Mammary epithelial cell (primary cell): ENCODE measurements at regions of chr21 and their contacts with region 1.

Region 1: GRCh38 chr21:34054259-34054658 is 19.1 kb upstream of the MRPS6 start:
- DNase-seq: no peak
- H3K4me3 ChIP-seq: no peak overlapping the region
- H3K27ac ChIP-seq: no peak overlapping the region
- H3K4me1 ChIP-seq: no peaks in the 10 kb centered on the region
- H3K27me3 ChIP-seq: no peaks in the 10 kb centered on the region
- CTCF ChIP-seq: no peak

Region 2: GRCh38 chr21:34100790-34101189 is 46.5 kb after region 1 on chr21:
- CTCF ChIA-PET with region 1: no interaction called
- dilution Hi-C with region 1: loop called (anchors 5 kb)
- in situ Hi-C with region 1: no loop called
- intact Hi-C with region 1: no loop called
- DNase-seq: no peak
- H3K4me3 ChIP-seq: no peak overlapping the region
- H3K27ac ChIP-seq: no peak overlapping the region
- H3K4me1 ChIP-seq: no peaks in the 10 kb centered on the region
- H3K27me3 ChIP-seq: no peaks in the 10 kb centered on the region
- CTCF ChIP-seq: no peak

Region 3: DNA sequence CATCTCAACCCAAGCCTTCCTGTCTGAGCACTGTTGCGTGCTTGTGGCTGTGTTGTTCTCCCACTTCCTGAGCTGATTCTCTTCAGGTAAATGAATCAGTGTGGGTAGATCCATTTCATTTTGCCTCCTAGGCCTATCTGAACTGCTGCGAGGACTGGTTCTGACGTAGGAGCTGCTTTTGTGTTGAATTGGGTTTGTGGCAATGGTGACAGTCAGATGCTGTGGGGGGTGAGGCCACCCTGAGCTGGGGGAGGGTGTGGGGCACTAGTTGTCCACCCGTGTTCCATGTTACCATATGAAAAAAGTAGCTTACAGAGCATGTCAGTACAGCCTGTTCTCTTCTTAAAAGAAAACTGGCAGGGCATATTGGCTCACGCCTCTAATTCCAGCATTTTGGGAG is 100.6 kb after region 1 on chr21:
- CTCF ChIA-PET with region 1: no interaction called
- dilution Hi-C with region 1: loop called (anchors 5 kb)
- in situ Hi-C with region 1: no loop called
- intact Hi-C with region 1: no loop called
- DNase-seq: no peak
- H3K4me3 ChIP-seq: no peak overlapping the region
- H3K27ac ChIP-seq: no peak overlapping the region
- H3K4me1 ChIP-seq: no peaks in the 10 kb centered on the region
- H3K27me3 ChIP-seq: no peaks in the 10 kb centered on the region
- CTCF ChIP-seq: no peak

Region 4: DNA sequence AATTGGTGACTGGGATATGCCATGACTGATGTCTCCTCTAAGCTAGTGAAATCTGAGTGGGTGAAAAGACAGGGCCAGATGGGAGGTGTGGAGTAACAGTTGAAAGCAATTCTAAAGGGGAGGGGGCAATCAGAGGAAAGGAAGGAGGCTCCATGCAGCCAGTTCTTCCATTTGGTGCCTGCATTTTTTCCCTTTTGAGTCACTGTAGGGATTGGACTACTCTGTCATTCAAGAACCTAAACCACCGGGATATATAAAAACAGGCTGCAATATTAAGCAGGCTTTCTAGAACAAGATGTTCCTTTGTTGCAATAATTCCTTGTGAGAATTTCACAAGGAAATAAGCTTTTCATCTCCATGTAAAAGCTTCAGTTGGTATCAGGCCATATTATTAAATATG is 632.8 kb after region 1 on chr21:
- CTCF ChIA-PET with region 1: no interaction called
- dilution Hi-C with region 1: no loop called
- in situ Hi-C with region 1: no loop called
- intact Hi-C with region 1: no loop called
- DNase-seq: no peak
- H3K4me3 ChIP-seq: no peak overlapping the region
- H3K27ac ChIP-seq: no peak overlapping the region
- H3K4me1 ChIP-seq: peaks cover 6% of the 10 kb centered on the region
- H3K27me3 ChIP-seq: no peaks in the 10 kb centered on the region
- CTCF ChIP-seq: no peak